Activated CD4-positive, alpha-beta T cell treated with anti-CD3 and anti-CD28 coated beads for 36 hours (primary cell): ENCODE measurements at regions of chr11 and their contacts with region 1.

Region 1: DNA sequence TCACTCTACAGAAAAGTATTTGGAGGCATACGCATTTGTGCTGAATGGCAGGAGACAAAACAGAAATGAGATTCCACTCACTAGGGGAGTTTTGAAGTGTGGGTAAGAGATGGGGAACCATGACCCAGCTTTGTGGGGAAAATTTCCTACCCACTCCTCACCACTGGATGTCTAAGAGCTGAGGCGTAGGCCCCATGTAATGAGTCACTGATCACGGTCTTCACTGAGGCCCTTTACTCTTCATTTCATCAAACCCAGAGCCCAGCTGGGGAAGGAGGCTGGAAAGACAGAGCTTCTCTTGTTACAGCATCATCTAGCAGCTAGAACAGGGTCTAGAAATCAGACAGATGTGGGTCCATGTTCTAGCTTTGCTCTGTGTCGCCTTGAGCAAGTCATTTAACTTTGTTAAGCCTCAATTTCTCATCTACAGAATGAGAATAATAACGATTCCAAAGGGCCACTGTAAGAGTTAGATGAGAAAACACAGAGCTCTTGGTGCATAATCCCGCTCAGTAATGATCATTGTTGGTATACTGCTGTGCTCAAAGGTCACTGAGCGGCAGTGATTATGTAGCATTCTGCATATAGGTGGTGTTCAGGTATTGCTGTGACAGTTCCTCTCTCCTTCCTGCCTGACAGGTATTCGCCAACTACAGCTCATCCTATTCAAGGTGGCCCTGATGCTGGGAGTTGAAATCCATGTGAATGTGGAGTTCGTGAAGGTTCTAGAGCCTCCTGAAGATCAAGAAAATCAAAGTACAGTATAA is 97.2 kb downstream of the MICAL2 start:
- DNase-seq: peak; percentile 80
- ATAC-seq: peak; percentile 85
- H3K4me3 Mint-ChIP-seq: peak overlapping the region; percentile 50
- H3K27ac Mint-ChIP-seq: peak overlapping the region; percentile 92
- H3K4me1 Mint-ChIP-seq: peaks cover 69% of the 10 kb centered on the region
- H3K27me3 Mint-ChIP-seq: no peaks in the 10 kb centered on the region

Region 2: GRCh38 chr11:12110201-12110713 is 97.3 kb before region 1 on chr11 and contains the start of gene MICAL2:
- CTCF ChIA-PET with region 1: no interaction called
- POLR2A ChIA-PET with region 1: no interaction called
- intact Hi-C with region 1: loop called in 1 of 2 experiments (anchors 1 kb)
- DNase-seq: peak; percentile 92
- ATAC-seq: peak; percentile 88
- H3K4me3 Mint-ChIP-seq: peak within 1 kb of the TSS; percentile 75
- H3K27ac Mint-ChIP-seq: peak within 1 kb of the TSS; percentile 90
- H3K4me1 Mint-ChIP-seq: peaks cover 41% of the 10 kb centered on the region
- H3K27me3 Mint-ChIP-seq: no peaks in the 10 kb centered on the region
- total RNA-seq, gene MICAL2: 186 to 207 TPM

Region 3: DNA sequence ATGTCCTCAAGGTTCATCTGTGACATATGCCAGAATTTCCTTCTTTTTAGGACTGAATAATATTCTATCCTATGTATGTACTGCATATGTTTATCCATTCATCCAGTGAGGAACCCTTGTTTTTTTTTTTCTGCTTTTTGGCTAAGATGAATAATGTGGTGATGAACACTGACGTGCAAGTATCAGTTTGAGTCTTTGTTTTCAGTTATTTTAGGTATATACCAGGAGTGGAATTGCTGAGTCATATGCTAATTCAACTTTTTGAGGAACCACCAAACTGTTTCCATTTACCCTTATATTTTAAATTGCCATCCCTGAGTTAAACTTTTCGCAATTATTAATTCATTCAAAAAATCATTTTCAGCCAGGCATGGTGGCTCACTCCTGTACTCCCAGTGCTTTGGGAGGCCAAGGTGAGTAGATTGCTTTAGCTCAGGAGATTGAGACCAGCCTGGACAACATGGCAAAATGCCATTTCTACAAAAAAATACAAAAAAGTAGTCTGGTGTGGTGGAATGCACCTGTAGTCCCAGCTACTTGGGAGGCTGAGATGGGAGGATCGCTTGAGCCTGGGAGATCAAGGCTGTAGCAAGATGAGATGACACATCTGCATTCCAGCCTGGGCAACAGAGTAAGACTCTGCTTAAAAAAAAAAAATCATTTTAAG is 33.0 kb before region 1 on chr11:
- CTCF ChIA-PET with region 1: interaction called, 7 read pairs
- POLR2A ChIA-PET with region 1: interaction called, 5 read pairs
- intact Hi-C with region 1: loop called (anchors 1 kb)
- DNase-seq: no peak
- ATAC-seq: peak; percentile 59
- H3K4me3 Mint-ChIP-seq: peak overlapping the region; percentile 47
- H3K27ac Mint-ChIP-seq: peak overlapping the region; percentile 94
- H3K4me1 Mint-ChIP-seq: peaks cover 69% of the 10 kb centered on the region
- H3K27me3 Mint-ChIP-seq: no peaks in the 10 kb centered on the region

Region 4: GRCh38 chr11:12224537-12224893 is 16.9 kb after region 1 on chr11:
- CTCF ChIA-PET with region 1: interaction called, 10 read pairs
- POLR2A ChIA-PET with region 1: interaction called, 8 read pairs
- intact Hi-C with region 1: loop called (anchors 1 kb)
- DNase-seq: peak; percentile 96
- ATAC-seq: peak; percentile 97
- H3K4me3 Mint-ChIP-seq: peak overlapping the region; percentile 74
- H3K27ac Mint-ChIP-seq: peak overlapping the region; percentile 93
- H3K4me1 Mint-ChIP-seq: peaks cover 48% of the 10 kb centered on the region
- H3K27me3 Mint-ChIP-seq: no peaks in the 10 kb centered on the region